Heart left ventricle (tissue), 16 donors: ENCODE measurements at regions of chr17 and their contacts with region 1.

Region 1: DNA sequence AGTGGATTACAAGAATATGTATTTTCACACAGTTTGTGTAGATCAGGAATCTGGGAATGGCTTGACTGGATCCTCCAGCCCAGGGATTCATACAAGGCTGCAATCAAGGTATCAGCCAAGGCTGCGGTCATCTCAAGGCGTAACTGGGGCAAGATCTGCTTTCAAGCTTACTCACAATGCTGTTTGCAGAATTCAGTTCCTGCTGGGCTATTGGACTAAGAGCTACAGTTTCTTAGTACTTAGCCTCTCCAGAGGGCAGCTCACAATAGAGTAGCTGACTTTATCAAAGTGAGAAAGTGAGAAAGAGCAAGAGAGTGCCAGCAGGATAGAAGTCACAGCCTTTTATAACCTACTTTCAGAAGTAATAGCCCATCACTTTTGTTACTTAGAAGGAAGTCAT is 211.0 kb downstream of the MAP2K6 start:
- DNase-seq: no peak
- ATAC-seq: no peak
- H3K4me3 ChIP-seq: no peak overlapping the region
- H3K27ac ChIP-seq: no peak overlapping the region
- H3K4me1 ChIP-seq: no peaks in the 10 kb centered on the region
- H3K27me3 ChIP-seq: no peaks in the 10 kb centered on the region
- CTCF ChIP-seq: no peak
- POLR2A ChIP-seq: no peak

Region 2: GRCh38 chr17:69592692-69593350 is 32.7 kb before region 1 on chr17:
- intact Hi-C with region 1: no loop called
- DNase-seq: no peak
- ATAC-seq: no peak
- H3K4me3 ChIP-seq: no peak overlapping the region
- H3K27ac ChIP-seq: no peak overlapping the region
- H3K4me1 ChIP-seq: peaks cover 0 to 4% (median 0%) of the 10 kb centered on the region in 12 donors
- H3K27me3 ChIP-seq: no peaks in the 10 kb centered on the region
- CTCF ChIP-seq: no peak
- POLR2A ChIP-seq: no peak

Region 3: DNA sequence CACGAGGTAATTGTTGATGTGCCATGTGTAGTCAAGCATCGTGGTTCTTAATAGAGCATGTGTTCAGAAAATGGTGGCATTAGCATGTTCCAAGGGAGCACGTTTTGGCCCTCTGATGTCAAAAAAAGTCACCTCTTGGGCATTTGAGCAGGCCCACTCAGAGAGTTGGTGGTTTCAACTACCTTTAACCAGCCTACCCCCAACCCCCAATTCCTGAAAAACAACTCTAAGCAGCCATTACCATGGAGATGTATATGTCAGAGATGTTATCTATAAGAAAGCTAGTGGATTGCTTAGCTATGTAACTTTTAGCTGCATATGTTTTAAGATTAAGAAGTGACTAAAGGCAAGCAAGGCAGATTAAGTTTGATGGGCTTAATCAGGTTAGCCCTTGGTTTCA is 34.4 kb after region 1 on chr17:
- intact Hi-C with region 1: no loop called
- DNase-seq: no peak
- ATAC-seq: no peak
- H3K4me3 ChIP-seq: no peak overlapping the region
- H3K27ac ChIP-seq: no peak overlapping the region
- H3K4me1 ChIP-seq: peaks cover 0 to 8% (median 0%) of the 10 kb centered on the region in 12 donors
- H3K27me3 ChIP-seq: no peaks in the 10 kb centered on the region
- CTCF ChIP-seq: no peak
- POLR2A ChIP-seq: no peak

Region 4: GRCh38 chr17:69761751-69762321 is 136.4 kb after region 1 on chr17:
- intact Hi-C with region 1: loop called in 1 of 10 experiments (anchors 10 kb)
- DNase-seq: no peak
- ATAC-seq: no peak
- H3K4me3 ChIP-seq: no peak overlapping the region
- H3K27ac ChIP-seq: no peak overlapping the region
- H3K4me1 ChIP-seq: peaks cover 0 to 8% (median 0%) of the 10 kb centered on the region in 12 donors
- H3K27me3 ChIP-seq: no peaks in the 10 kb centered on the region
- CTCF ChIP-seq: no peak
- POLR2A ChIP-seq: no peak